MCF 10A (cell line): ENCODE measurements at regions of chr5 and their contacts with region 1.

Region 1: DNA sequence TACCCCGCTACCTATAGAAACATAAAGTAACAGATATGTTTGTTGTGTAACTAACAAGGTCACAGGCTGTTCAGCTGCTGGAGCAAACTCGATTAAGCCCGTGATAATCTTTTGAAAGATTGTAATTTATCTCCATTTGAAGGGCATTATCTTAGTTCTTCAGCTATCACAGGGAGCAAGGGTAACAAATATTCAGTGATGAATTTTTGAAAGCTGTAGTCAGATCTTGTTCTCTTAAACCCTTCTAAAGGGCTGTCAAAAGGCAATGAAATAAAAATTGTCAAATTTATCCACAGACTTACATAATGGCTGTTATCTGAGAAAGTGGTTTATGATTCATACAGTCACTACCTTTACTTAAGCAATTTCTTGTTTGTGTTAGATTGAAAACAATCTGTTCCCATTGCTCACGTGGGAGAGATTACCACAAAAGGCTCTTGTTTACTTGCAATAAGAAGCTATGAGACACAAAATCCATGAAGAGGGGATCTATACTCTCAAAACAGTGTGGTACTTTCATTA is 78.3 kb upstream of the ZNF608 start:
- DNase-seq: peak; percentile 96
- H3K4me3 Mint-ChIP-seq: peak overlapping the region; percentile 55
- H3K27ac Mint-ChIP-seq: peak overlapping the region; percentile 89
- H3K4me1 Mint-ChIP-seq: peaks cover 33% of the 10 kb centered on the region
- H3K27me3 Mint-ChIP-seq: no peaks in the 10 kb centered on the region
- CTCF ChIP-seq: no peak

Region 2: DNA sequence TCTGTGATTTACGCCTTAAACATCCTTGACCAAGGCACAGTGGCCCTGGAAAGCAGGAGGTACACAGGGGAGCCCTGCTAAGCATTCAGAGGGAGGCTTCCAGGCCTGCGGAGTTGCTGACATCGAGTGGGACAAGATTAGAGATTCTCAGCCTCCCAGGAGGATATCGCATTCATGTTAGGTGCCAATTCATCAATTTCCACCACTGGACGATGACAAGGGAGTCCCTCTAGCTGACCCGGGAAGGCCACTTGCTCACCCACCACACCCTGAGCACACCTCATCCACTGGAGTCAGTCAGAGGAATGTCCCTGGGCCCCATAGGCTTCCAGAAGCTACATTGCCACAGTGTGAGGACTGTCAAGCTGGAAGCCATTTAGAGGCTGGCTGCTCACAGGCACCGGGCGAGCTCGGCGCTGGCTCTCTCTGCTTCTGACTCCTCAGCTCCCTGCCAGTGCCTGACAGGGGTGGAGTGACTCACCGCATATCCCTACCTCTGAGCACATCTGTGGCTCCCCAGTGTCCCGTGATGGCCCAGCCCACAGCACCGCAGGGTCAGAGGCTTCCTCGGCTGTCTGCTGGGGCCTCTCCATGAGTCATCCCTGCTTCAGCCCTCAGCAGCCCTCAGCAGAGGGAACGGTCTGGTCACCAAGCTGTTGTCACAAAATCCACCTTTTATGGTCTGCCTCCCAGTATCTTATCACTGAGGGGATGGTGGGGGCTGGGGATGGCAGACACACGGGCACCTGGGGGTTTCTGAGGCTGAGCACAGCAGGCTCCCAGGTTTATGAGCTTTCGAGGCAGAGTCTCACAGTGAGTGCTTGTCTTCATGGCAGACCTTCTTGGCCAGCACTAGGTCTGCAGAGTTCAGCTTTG is 195.7 kb before region 1 on chr5:
- CTCF ChIA-PET with region 1: no interaction called
- POLR2A ChIA-PET with region 1: no interaction called
- intact Hi-C with region 1: no loop called
- DNase-seq: peak; percentile 98
- H3K4me3 Mint-ChIP-seq: peak overlapping the region; percentile 29
- H3K27ac Mint-ChIP-seq: peak overlapping the region; percentile 75
- H3K4me1 Mint-ChIP-seq: peaks cover 34% of the 10 kb centered on the region
- H3K27me3 Mint-ChIP-seq: no peaks in the 10 kb centered on the region
- CTCF ChIP-seq: no peak

Region 3: DNA sequence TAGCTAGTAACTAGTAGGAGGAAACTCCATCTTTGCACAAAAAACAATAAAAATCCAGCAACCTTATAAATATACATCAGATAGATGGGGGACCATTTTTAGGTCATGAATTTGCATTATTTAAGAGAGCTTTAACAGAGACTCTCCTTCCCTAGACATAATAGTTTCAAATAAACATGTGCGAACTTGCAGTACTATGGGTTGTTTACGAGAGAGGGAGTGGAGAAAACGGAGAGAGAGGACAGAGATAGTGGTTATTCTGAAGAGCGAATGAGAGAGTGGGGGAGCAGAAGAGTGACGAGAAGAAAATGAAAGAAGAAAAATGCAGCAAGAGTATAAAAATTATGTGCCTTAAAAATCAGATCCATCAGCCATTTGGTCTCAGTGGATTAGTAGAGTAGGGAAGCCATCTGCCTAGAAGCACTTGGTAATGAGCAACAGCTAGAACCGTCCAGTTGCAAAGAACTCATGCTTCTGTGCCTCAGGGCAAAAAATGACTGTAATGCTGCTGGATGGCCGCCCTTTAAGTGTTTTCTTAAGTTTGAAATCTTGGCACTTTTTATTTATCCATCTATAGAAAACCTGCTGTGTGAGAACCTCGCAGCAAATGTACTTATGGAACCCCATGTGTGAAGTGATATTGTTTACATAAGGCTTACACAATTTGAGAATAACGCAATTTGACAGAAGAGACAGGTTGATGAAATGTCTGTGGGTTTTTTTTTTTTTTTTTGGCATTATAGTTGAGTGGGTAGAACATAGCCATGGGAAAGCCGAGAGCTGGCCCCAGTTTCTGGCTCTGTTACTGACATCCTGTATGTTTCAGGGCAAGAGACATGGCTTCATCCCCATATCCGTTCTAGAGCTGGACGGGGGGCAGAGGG is 17.4 kb after region 1 on chr5:
- CTCF ChIA-PET with region 1: no interaction called
- POLR2A ChIA-PET with region 1: interaction called, 138 read pairs
- intact Hi-C with region 1: no loop called
- DNase-seq: peak; percentile 100
- H3K4me3 Mint-ChIP-seq: peak overlapping the region; percentile 38
- H3K27ac Mint-ChIP-seq: peak overlapping the region; percentile 3
- H3K4me1 Mint-ChIP-seq: peaks cover 21% of the 10 kb centered on the region
- H3K27me3 Mint-ChIP-seq: no peaks in the 10 kb centered on the region
- CTCF ChIP-seq: no peak